Head of caudate nucleus (tissue), 42 donors: ENCODE measurements at regions of chr4 and their contacts with region 1.

Region 1: DNA sequence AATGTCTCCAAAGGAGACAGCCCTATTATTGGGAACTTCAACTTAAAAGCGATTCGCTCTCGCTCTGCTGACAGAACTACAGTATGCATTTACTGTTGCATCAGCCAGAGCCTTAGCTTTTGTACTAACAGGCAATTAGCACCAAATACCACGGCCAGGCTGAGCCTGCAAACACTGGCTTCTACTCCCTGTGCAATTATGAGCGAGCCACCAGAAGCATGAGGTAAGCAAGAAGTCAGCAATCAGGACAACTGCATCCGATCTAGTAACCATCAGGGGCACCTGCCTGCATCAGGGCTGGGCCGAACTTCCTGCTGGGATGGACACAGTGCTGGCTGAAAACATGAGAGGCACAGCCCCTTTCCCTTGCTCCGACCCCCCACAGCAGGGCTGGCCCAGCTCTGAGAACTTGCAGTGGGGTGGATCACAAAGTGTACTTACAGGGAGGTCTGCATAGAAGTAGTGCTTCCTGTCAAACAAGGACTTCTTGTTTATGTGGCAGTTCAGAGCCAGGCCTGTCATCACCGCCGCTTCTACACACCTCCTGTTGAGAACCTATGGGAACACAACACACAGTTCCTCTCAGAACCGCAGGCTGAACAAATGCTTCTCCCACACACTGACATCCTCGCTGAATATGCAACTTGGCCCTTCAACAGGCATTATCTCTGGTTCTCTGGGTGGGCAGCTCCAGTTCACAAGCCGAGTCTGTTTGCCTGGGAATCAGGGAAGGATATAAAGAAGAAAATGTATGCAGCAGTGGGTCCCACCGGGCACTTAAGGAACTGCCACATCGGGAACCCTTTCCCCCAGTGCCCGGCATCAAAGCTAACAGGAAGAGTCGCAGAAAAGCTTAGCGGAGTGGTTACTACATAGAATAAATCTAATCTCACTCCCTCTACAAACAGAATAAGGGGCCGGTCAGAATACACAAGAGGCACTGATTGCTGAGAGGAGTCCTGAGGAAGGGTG is 41.5 kb downstream of the GATB start:
- DNase-seq: peak in 1 of 42 donors; percentile 36

Region 2: GRCh38 chr4:151760712-151761527 is 41.6 kb after region 1 on chr4 and contains the start of gene GATB:
- intact Hi-C with region 1: loop called (anchors 5 kb)
- DNase-seq: peak; percentile 92 to 99 (median 97)

Region 3: DNA sequence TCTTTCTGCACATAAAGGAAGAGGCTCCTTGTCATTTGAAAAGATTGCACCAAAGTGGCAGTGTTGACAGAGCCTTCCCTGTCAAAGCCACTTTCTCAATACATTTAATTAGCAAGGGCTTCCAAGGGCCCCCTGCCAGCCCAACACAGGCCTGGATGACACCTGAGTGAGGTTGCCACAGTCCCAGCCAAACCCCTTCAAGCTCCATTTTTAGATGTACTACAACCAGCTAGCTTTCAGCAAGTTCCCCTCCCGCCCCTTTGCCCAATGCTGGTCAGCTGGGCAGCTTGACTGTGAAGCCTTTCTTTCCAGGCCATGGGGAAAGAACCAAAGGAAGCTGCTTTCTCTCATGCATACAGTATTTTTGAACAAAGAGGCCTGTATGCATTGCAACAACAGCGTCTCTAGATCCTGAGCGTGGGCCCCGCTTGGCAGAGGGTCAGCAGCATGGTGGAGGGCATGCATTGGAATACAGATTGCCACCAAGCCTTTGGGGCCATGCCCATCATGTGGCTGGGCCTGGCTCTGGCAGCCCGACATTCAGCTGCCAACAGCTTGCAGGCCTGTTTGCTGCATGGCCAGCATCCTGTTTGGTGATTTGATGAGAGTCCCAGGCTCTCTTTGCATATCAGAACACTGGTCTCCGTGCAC is 302.6 kb after region 1 on chr4:
- intact Hi-C with region 1: loop called (anchors 5 kb)
- DNase-seq: peak; percentile 72 to 98 (median 94)

Region 4: GRCh38 chr4:152983774-152984411 is 1264.6 kb after region 1 on chr4:
- intact Hi-C with region 1: no loop called
- DNase-seq: peak; percentile 31 to 95 (median 74)